PC-9 (cell line): ENCODE measurements at regions of chr14 and their contacts with region 1.

Region 1: GRCh38 chr14:59422069-59422881 is 42.9 kb downstream of the GPR135 start:
- DNase-seq: no peak
- H3K4me3 ChIP-seq: no peak overlapping the region
- H3K27ac ChIP-seq: no peak overlapping the region
- H3K4me1 ChIP-seq: no peaks in the 10 kb centered on the region
- H3K27me3 ChIP-seq: no peaks in the 10 kb centered on the region
- CTCF ChIP-seq: no peak; the same call in 1 of the 2 replicates

Region 2: GRCh38 chr14:59360923-59361794 is 61.1 kb before region 1 on chr14:
- CTCF ChIA-PET with region 1: no interaction called
- POLR2A ChIA-PET with region 1: no interaction called
- intact Hi-C with region 1: loop called (anchors 5 kb)
- DNase-seq: peak; percentile 88 to 99
- H3K4me3 ChIP-seq: peak overlapping the region; percentile 33; the same call in 1 of the 2 replicates
- H3K27ac ChIP-seq: peak overlapping the region; percentile 86
- H3K4me1 ChIP-seq: peaks cover 100% of the 10 kb centered on the region
- H3K27me3 ChIP-seq: no peaks in the 10 kb centered on the region
- CTCF ChIP-seq: no peak

Region 3: DNA sequence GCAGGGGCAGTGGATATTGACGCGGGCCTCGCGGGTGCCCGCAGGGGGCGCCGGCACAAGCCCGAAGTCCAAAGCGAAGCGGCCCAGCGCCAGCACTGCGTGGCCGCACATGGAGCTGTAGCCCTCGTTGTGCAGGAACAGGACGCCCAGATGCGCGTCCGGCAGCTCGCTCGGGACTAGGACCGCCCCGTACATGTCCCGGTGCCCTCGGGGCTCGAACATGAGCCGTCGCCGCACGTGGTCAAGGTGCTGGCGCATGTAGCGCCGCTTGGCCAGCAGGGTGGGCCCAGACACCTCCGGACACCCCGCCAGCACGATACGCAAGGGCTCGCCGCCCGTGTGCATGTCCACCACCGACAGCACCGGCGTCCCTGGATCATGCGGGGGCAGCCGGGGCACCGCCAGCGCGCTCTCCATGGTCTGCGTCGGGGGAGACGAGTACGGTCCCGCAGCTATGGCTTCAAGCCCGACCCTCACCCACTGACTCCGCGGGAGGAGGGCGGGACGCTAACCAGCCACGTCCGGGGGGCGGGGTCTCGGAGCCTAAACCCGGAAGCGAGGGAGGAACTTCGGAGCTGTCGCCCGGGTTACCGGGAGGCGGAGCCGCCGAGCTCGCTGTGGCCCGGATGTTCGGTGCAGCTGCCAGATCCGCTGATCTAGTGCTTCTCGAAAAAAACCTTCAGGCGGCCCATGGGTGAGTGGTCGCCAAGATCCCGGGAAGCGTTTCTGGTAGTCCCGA is 61.8 kb after region 1 on chr14 and contains the starts of genes JKAMP and L3HYPDH:
- CTCF ChIA-PET with region 1: no interaction called
- POLR2A ChIA-PET with region 1: no interaction called
- intact Hi-C with region 1: no loop called
- DNase-seq: peak; percentile 89 to 96
- H3K4me3 ChIP-seq: peak within 1 kb of the TSS; percentile 99
- H3K27ac ChIP-seq: peak within 1 kb of the TSS; percentile 96
- H3K4me1 ChIP-seq: peaks cover 46% of the 10 kb centered on the region
- H3K27me3 ChIP-seq: no peaks in the 10 kb centered on the region
- CTCF ChIP-seq: peak; percentile 50
- total RNA-seq, gene JKAMP: 54.6 and 60.1 TPM in 2 replicates
- total RNA-seq, gene L3HYPDH: 96.3 and 121 TPM in 2 replicates